CD8-positive, alpha-beta T cell (primary cell): ENCODE measurements at regions of chr2 and their contacts with region 1.

Region 1: GRCh38 chr2:60867848-60868247 is 13.5 kb upstream of the REL start:
- DNase-seq: peak in 7 of 9 experiments; percentile 7 to 76 (median 24)
- ATAC-seq: peak; percentile 90
- H3K4me3 ChIP-seq: no peak overlapping the region
- H3K4me3 Mint-ChIP-seq: peak overlapping the region; percentile 32
- H3K27ac ChIP-seq: peak overlapping the region in 1 of 2 experiments; percentile 69
- H3K27ac Mint-ChIP-seq: peak overlapping the region; percentile 91
- H3K4me1 ChIP-seq: peaks cover 15% of the 10 kb centered on the region
- H3K4me1 Mint-ChIP-seq: peaks cover 20% of the 10 kb centered on the region
- H3K27me3 ChIP-seq: peaks cover 0 to 3% of the 10 kb centered on the region in 2 experiments
- H3K27me3 Mint-ChIP-seq: no peaks in the 10 kb centered on the region
- CTCF ChIP-seq: no peak

Region 2: GRCh38 chr2:60818272-60818671 is 49.6 kb before region 1 on chr2:
- CTCF ChIA-PET with region 1: no interaction called
- POLR2A ChIA-PET with region 1: no interaction called
- intact Hi-C with region 1: loop called in 1 of 2 experiments (anchors 1 kb)
- DNase-seq: peak in 5 of 9 experiments; percentile 40 to 70 (median 50)
- ATAC-seq: no peak
- H3K4me3 ChIP-seq: no peak overlapping the region
- H3K4me3 Mint-ChIP-seq: no peak overlapping the region
- H3K27ac ChIP-seq: peak overlapping the region in 1 of 2 experiments; percentile 83
- H3K27ac Mint-ChIP-seq: peak overlapping the region; percentile 78
- H3K4me1 ChIP-seq: peaks cover 32% of the 10 kb centered on the region
- H3K4me1 Mint-ChIP-seq: peaks cover 43% of the 10 kb centered on the region
- H3K27me3 ChIP-seq: no peaks in the 10 kb centered on the region
- H3K27me3 Mint-ChIP-seq: peaks cover 5% of the 10 kb centered on the region
- CTCF ChIP-seq: peak; percentile 19